Adrenal gland (tissue), 19 donors: ENCODE measurements at regions of chr22 and their contacts with region 1.

Region 1: GRCh38 chr22:40898850-40899357 is 37.0 kb upstream of the DNAJB7 start:
- DNase-seq: peak in 1 of 7 donors; percentile 29
- H3K4me3 ChIP-seq: no peak overlapping the region
- H3K27ac ChIP-seq: no peak overlapping the region
- H3K4me1 ChIP-seq: no peaks in the 10 kb centered on the region
- H3K27me3 ChIP-seq: no peaks in the 10 kb centered on the region
- CTCF ChIP-seq: peak; percentile 27 to 62 (median 54)
- POLR2A ChIP-seq: no peak

Region 2: GRCh38 chr22:40818747-40819598 is 79.9 kb before region 1 on chr22 and contains the start of gene SLC25A17:
- intact Hi-C with region 1: loop called in 1 of 2 experiments (anchors 10 kb)
- DNase-seq: peak; percentile 87 to 92 (median 89)
- H3K4me3 ChIP-seq: peak within 1 kb of the TSS; percentile 54 to 100 (median 94)
- H3K27ac ChIP-seq: peak within 1 kb of the TSS; percentile 59 to 88 (median 72)
- H3K4me1 ChIP-seq: peaks cover 12 to 26% of the 10 kb centered on the region in 2 donors
- H3K27me3 ChIP-seq: no peaks in the 10 kb centered on the region
- CTCF ChIP-seq: peak; percentile 8 to 61 (median 38)
- POLR2A ChIP-seq: peak in 1 of 2 donors; percentile 39
- total RNA-seq, gene SLC25A17: 18.3 to 40.8 (median 22.4) TPM

Region 3: GRCh38 chr22:41001722-41002122 is 102.8 kb after region 1 on chr22:
- intact Hi-C with region 1: no loop called
- DNase-seq: peak in 1 of 7 donors; percentile 3
- H3K4me3 ChIP-seq: no peak overlapping the region
- H3K27ac ChIP-seq: no peak overlapping the region
- H3K4me1 ChIP-seq: no peaks in the 10 kb centered on the region
- H3K27me3 ChIP-seq: no peaks in the 10 kb centered on the region
- CTCF ChIP-seq: no peak
- POLR2A ChIP-seq: no peak